Esophagus muscularis mucosa (tissue), 4 donors: ENCODE measurements at regions of chr1 and their contacts with region 1.

Region 1: DNA sequence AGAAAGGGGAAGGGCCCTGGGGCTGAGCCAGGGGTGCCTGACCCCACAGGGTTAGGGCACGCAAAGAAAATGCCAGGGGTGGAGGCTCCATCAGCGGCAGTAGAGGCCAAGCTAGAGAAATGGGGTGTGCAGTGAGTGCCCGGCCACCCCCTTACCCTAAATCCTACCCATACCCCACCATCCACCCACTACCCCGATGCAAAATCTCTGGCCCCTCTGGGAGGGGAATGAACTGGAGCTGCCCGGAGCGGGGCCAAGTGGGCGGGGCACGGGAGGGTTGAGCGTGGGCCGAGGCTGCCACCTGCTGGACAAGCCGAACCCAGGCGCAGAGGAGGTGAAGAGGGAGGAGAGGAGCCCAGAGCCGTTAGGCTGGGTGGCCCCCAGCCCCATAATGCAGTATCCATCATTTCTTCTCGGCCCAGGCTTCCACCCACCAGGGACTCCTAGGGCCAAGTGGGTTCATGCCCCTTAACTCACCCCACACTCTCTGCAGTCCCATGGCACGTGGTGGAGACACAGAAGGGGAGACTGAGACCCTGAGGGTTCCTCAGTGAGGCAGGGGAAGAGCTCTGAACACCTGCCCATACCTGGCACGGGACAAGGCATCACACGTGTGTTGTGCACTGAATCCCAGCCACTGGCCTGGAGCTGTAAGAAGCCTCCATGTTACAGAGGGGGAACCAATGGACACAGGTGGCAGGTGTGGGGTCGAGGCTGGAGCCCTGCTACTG is 1.4 kb upstream of the C1QC start:
- DNase-seq: peak; percentile 96
- H3K4me3 ChIP-seq: peak overlapping the region in 1 of 4 donors; percentile 32
- H3K27ac ChIP-seq: no peak overlapping the region
- H3K4me1 ChIP-seq: peaks cover 0 to 11% (median 7%) of the 10 kb centered on the region in 4 donors
- H3K27me3 ChIP-seq: peaks cover 0 to 46% (median 0%) of the 10 kb centered on the region in 4 donors
- CTCF ChIP-seq: peak; percentile 87 to 97 (median 95)
- EP300 ChIP-seq: no peak
- POLR2A ChIP-seq: no peak

Region 2: DNA sequence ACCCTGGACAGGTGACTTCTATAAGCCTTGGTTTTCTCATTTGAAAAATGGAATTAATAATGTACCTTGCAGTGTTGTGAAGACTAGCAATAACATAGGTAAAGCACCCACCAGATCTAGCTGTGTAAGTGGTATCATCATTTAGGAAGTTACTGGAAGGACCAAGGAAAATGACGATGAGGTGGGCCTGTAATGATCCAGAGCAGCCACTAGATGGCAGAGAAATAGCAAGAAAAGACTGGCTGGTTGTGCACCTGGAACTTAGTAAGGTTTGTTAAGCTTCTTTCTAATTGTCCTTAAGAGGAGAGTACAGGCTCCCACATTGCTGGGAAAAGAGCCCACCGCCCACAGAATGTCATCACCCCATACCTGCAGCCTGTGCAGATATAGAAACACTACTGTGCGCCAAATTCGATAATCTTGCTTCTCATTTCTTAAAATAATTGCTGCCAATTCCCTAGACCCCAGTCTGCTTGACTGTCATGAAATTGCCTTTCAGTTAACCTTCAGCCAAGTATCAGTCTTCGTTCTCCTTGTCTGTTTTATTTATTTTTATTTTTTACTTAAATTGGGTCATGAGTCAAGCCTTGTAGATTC is 536.4 kb before region 1 on chr1:
- intact Hi-C with region 1: loop called (anchors 10 kb)
- DNase-seq: no peak
- H3K4me3 ChIP-seq: no peak overlapping the region
- H3K27ac ChIP-seq: no peak overlapping the region
- H3K4me1 ChIP-seq: peaks cover 13 to 62% (median 38%) of the 10 kb centered on the region in 4 donors
- H3K27me3 ChIP-seq: no peaks in the 10 kb centered on the region
- CTCF ChIP-seq: peak; percentile 72 to 79 (median 76)
- EP300 ChIP-seq: no peak
- POLR2A ChIP-seq: no peak

Region 3: DNA sequence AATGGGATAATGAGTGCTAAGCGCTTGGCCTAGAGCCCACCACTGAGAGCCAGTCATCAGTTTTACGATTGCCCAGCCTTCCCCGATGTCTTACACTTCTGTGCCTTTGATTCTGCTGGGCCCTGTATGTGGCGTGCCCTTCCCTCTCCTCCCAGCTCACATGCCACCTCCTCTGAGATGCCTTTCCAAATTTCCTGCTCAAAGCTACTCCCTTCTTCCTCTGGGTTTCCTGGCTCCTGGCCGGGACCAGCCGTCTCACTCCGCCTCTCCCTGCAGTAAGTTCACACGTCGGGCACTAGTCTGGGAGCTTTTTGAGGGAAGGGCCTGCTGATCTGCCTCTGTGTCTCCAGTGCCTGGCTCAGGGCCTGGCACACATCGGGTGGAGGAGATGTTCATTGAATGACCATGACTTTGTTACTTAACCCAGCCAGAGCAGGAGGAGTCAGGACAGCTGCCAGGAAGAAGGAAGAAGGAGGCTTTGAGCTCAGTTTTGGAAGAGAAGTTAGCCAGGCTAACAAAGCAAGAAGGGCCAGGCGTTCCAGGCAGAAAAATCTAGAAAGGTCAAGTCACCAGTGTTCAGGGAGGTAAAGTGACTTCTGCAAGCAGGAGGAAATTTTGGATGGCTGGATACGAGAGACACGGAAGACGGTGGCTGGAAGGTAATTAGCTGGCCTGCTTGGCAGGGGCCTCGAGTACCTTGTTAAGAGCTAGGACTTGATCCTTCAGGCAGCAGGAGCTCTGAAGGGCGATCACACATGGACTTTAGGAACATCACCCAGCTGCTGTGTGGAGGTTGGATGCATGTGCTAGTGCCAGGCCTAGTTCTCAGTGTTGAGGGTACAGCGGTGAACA is 132.1 kb after region 1 on chr1:
- intact Hi-C with region 1: no loop called
- DNase-seq: no peak
- H3K4me3 ChIP-seq: no peak overlapping the region
- H3K27ac ChIP-seq: peak overlapping the region in 2 of 4 donors; percentile 6 to 14
- H3K4me1 ChIP-seq: peaks cover 7 to 45% (median 34%) of the 10 kb centered on the region in 4 donors
- H3K27me3 ChIP-seq: peaks cover 0 to 14% (median 0%) of the 10 kb centered on the region in 4 donors
- CTCF ChIP-seq: no peak
- EP300 ChIP-seq: no peak
- POLR2A ChIP-seq: no peak